Breast epithelium (tissue), 4 donors: ENCODE measurements at regions of chr2 and their contacts with region 1.

Region 1: GRCh38 chr2:101064868-101065549 is 62.9 kb downstream of the RPL31 start:
- DNase-seq: peak in 1 of 2 donors; percentile 58
- H3K4me3 ChIP-seq: no peak overlapping the region
- H3K27ac ChIP-seq: peak overlapping the region; percentile 62 to 76
- H3K4me1 ChIP-seq: peaks cover 0 to 21% of the 10 kb centered on the region in 2 donors
- H3K27me3 ChIP-seq: no peaks in the 10 kb centered on the region
- CTCF ChIP-seq: no peak
- POLR2A ChIP-seq: no peak

Region 2: DNA sequence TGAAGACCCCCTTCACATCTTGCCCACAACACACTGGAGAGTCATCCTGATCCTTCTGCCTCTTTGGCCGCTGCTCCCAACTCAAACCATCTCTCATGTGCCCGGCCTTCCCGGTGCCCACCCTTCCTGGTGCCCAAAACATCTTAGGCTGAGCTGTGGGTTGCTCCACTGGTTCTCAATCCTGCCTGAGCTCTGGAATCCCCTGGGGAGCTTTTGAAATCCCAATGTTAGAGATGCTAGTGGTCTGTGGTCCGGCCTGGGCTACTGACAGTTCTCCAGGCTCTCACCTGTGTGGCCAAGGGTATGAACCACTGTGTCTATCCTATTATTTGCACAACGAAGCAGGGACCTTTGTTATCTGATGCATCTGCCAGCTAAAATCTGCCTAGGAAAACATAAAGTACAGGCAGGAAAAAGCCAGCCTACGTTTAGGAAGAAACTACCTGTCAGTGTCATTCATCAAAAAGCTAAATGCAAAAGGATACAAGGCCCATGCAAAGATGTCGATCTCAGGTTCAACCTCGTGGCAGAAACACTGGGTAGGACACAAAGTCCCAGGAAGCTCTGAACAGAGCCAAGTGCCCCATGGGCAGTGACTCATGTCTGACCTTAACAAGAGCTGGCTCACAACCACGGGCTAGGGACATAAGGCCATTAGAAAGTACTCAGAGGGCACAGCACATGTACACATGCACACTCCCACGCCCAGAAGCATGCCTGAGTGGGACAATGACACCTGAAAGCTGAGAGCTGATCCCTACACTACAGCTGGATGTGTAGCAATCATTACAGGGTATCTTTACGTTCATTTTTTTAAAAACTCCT is 55.4 kb after region 1 on chr2:
- intact Hi-C with region 1: loop called (anchors 10 kb)
- DNase-seq: peak; percentile 90 to 95
- H3K4me3 ChIP-seq: no peak overlapping the region
- H3K27ac ChIP-seq: peak overlapping the region; percentile 85 to 89
- H3K4me1 ChIP-seq: peaks cover 9 to 35% of the 10 kb centered on the region in 2 donors
- H3K27me3 ChIP-seq: no peaks in the 10 kb centered on the region
- CTCF ChIP-seq: no peak
- POLR2A ChIP-seq: no peak

Region 3: GRCh38 chr2:102141970-102142828 is 1077.2 kb after region 1 on chr2 and contains the start of gene IL1R1:
- intact Hi-C with region 1: loop called (anchors 5 kb)
- DNase-seq: peak; percentile 63 to 71
- H3K4me3 ChIP-seq: peak within 1 kb of the TSS; percentile 71 to 94 (median 86)
- H3K27ac ChIP-seq: peak within 1 kb of the TSS; percentile 93 to 99
- H3K4me1 ChIP-seq: no peaks in the 10 kb centered on the region
- H3K27me3 ChIP-seq: no peaks in the 10 kb centered on the region
- CTCF ChIP-seq: no peak
- POLR2A ChIP-seq: no peak
- total RNA-seq, gene IL1R1: 127 to 206 (median 136) TPM